ENCODE measurements at regions of chr17 and their contacts with region 1.

Region 1: GRCh38 chr17:44112284-44113282 is 10.9 kb downstream of the HDAC5 start:
- DNase-seq: no peak
- ATAC-seq: no peak
- H3K4me3 ChIP-seq: no peak overlapping the region
- H3K4me3 Mint-ChIP-seq: peak overlapping the region; percentile 56
- H3K27ac ChIP-seq: no peak overlapping the region
- H3K27ac Mint-ChIP-seq: no peak overlapping the region
- H3K4me1 ChIP-seq: peaks cover 32 to 43% of the 10 kb centered on the region in 2 donors
- H3K4me1 Mint-ChIP-seq: peaks cover 47% of the 10 kb centered on the region
- H3K27me3 ChIP-seq: no peaks in the 10 kb centered on the region
- H3K27me3 Mint-ChIP-seq: no peaks in the 10 kb centered on the region
- CTCF ChIP-seq: no peak

Region 2: GRCh38 chr17:44123356-44124117 is 11.0 kb after region 1 on chr17 and contains the start of gene HDAC5:
- CTCF ChIA-PET with region 1: interaction called, 7 read pairs
- POLR2A ChIA-PET with region 1: interaction called, 7 read pairs
- intact Hi-C with region 1: loop called (anchors 1 kb)
- DNase-seq: peak; percentile 95
- ATAC-seq: peak; percentile 97
- H3K4me3 ChIP-seq: peak within 1 kb of the TSS; percentile 71 to 98 (median 85)
- H3K4me3 Mint-ChIP-seq: peak within 1 kb of the TSS; percentile 95
- H3K27ac ChIP-seq: peak within 1 kb of the TSS; percentile 43 to 90
- H3K27ac Mint-ChIP-seq: peak within 1 kb of the TSS; percentile 99
- H3K4me1 ChIP-seq: peaks cover 18 to 26% of the 10 kb centered on the region in 2 donors
- H3K4me1 Mint-ChIP-seq: peaks cover 45% of the 10 kb centered on the region
- H3K27me3 ChIP-seq: no peaks in the 10 kb centered on the region
- H3K27me3 Mint-ChIP-seq: no peaks in the 10 kb centered on the region
- CTCF ChIP-seq: peak; percentile 76
- total RNA-seq, gene HDAC5: 104 and 113 TPM in 2 replicates

Region 3: DNA sequence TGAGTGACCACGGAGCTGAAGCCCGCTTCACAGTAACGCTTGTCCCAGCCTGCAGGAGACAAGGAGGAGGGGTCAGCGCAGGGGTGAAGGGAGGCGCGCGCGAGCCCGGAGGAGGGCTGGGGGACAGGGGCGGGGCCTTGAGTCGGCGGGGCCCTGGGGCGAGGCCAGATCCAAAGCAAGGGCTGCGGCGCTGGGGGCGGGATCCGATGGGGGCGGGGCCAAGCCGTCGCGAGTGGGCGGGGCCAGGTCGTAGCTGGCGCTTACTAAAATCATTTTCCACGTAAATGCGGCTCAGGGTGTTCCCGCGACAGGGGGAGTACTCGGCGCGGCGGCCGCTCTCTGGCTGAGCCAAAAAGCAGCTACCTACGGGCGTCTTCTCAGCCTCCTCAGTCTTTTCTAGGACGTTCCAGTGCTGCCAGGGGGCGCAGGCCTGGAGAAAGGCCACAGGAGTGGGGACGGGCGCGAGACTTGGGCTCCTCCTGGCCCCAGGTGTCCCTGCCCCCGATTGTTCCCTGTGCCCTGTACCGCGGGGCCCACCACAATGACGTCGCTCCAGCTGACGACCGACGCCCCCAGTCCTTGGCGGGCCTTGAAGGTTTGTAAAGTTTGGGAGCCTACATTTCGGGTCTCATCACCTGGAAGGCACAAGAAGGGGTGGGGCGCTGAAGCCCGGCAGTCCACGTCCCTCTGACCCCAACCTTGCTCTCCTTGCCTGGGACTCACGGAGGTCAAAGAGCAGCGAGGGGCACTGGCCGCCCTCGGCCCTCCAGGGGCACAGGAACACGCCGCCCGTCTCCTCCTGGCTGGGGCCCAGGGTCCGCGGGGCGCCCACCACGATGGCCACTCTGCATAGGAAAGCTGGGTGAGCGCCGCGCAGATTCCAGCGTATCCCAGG is 273.0 kb after region 1 on chr17:
- CTCF ChIA-PET with region 1: no interaction called
- POLR2A ChIA-PET with region 1: no interaction called
- intact Hi-C with region 1: no loop called
- DNase-seq: peak; percentile 83
- ATAC-seq: peak; percentile 94
- H3K4me3 ChIP-seq: peak overlapping the region in 4 of 5 experiments; percentile 46 to 68 (median 58)
- H3K4me3 Mint-ChIP-seq: peak overlapping the region; percentile 81
- H3K27ac ChIP-seq: no peak overlapping the region
- H3K27ac Mint-ChIP-seq: no peak overlapping the region
- H3K4me1 ChIP-seq: peaks cover 22 to 24% of the 10 kb centered on the region in 2 donors
- H3K4me1 Mint-ChIP-seq: peaks cover 24% of the 10 kb centered on the region
- H3K27me3 ChIP-seq: peaks cover 0 to 46% (median 11%) of the 10 kb centered on the region in 4 experiments
- H3K27me3 Mint-ChIP-seq: peaks cover 39% of the 10 kb centered on the region
- CTCF ChIP-seq: peak; percentile 12